CD14-positive monocyte (primary cell): ENCODE measurements at regions of chr7 and their contacts with region 1.

Region 1: GRCh38 chr7:23013715-23014649 is at the start of gene HYCC1:
- DNase-seq: peak; percentile 98 to 99 (median 99)
- H3K4me3 ChIP-seq: peak within 1 kb of the TSS; percentile 81 to 92 (median 89)
- H3K4me3 Mint-ChIP-seq: peak within 1 kb of the TSS; percentile 94 to 95
- H3K27ac ChIP-seq: peak within 1 kb of the TSS; percentile 76 to 77
- H3K27ac Mint-ChIP-seq: peak within 1 kb of the TSS; percentile 75 to 93 (median 90)
- H3K4me1 ChIP-seq: peaks cover 63 to 78% of the 10 kb centered on the region in 2 donors
- H3K4me1 Mint-ChIP-seq: peaks cover 29% of the 10 kb centered on the region
- H3K27me3 ChIP-seq: no peaks in the 10 kb centered on the region
- H3K27me3 Mint-ChIP-seq: peaks cover 0 to 4% (median 2%) of the 10 kb centered on the region in 3 donors
- CTCF ChIP-seq: peak; percentile 83
- polyA plus RNA-seq, gene HYCC1: 4.7 to 12.7 (median 12.1) TPM

Region 2: GRCh38 chr7:22822486-22823141 is 191.4 kb before region 1 on chr7 and contains the start of gene TOMM7:
- intact Hi-C with region 1: loop called in 1 of 2 experiments (anchors 2 kb)
- DNase-seq: peak; percentile 94 to 97 (median 95)
- H3K4me3 ChIP-seq: peak within 1 kb of the TSS; percentile 78 to 95 (median 84)
- H3K4me3 Mint-ChIP-seq: peak within 1 kb of the TSS; percentile 97 to 98
- H3K27ac ChIP-seq: peak within 1 kb of the TSS; percentile 18 to 91
- H3K27ac Mint-ChIP-seq: peak within 1 kb of the TSS; percentile 91 to 98 (median 96)
- H3K4me1 ChIP-seq: peaks cover 16 to 17% of the 10 kb centered on the region in 2 donors
- H3K4me1 Mint-ChIP-seq: peaks cover 16% of the 10 kb centered on the region
- H3K27me3 ChIP-seq: peaks cover 6 to 24% of the 10 kb centered on the region in 2 donors
- H3K27me3 Mint-ChIP-seq: peaks cover 23 to 27% (median 24%) of the 10 kb centered on the region in 3 donors
- CTCF ChIP-seq: no peak
- polyA plus RNA-seq, gene TOMM7: 93.3 to 125 (median 111) TPM

Region 3: GRCh38 chr7:23055582-23056178 is 41.7 kb after region 1 on chr7:
- intact Hi-C with region 1: loop called in 1 of 2 experiments (anchors 5 kb)
- DNase-seq: peak; percentile 62 to 81 (median 70)
- H3K4me3 ChIP-seq: no peak overlapping the region
- H3K4me3 Mint-ChIP-seq: no peak overlapping the region
- H3K27ac ChIP-seq: no peak overlapping the region
- H3K27ac Mint-ChIP-seq: no peak overlapping the region
- H3K4me1 ChIP-seq: no peaks in the 10 kb centered on the region
- H3K4me1 Mint-ChIP-seq: peaks cover 5% of the 10 kb centered on the region
- H3K27me3 ChIP-seq: no peaks in the 10 kb centered on the region
- H3K27me3 Mint-ChIP-seq: peaks cover 0 to 5% (median 1%) of the 10 kb centered on the region in 3 donors
- CTCF ChIP-seq: peak; percentile 94

Region 4: GRCh38 chr7:23888958-23889357 is 875.0 kb after region 1 on chr7:
- intact Hi-C with region 1: no loop called
- DNase-seq: no peak
- H3K4me3 ChIP-seq: no peak overlapping the region
- H3K4me3 Mint-ChIP-seq: no peak overlapping the region
- H3K27ac ChIP-seq: no peak overlapping the region
- H3K27ac Mint-ChIP-seq: no peak overlapping the region
- H3K4me1 ChIP-seq: no peaks in the 10 kb centered on the region
- H3K4me1 Mint-ChIP-seq: no peaks in the 10 kb centered on the region
- H3K27me3 ChIP-seq: peaks cover 0 to 4% of the 10 kb centered on the region in 2 donors
- H3K27me3 Mint-ChIP-seq: peaks cover 4 to 15% (median 11%) of the 10 kb centered on the region in 3 donors
- CTCF ChIP-seq: no peak